ENCODE measurements at regions of chr5 and their contacts with region 1.

Region 1: GRCh38 chr5:16934123-16934522 is 2.0 kb downstream of the MYO10 start:
- DNase-seq: peak; percentile 77 to 87
- H3K4me3 ChIP-seq: peak overlapping the region; percentile 97
- H3K4me3 Mint-ChIP-seq: peak overlapping the region; percentile 90
- H3K27ac Mint-ChIP-seq: no peak overlapping the region
- H3K4me1 ChIP-seq: peaks cover 28% of the 10 kb centered on the region
- H3K4me1 Mint-ChIP-seq: peaks cover 30% of the 10 kb centered on the region
- H3K27me3 ChIP-seq: no peaks in the 10 kb centered on the region
- H3K27me3 Mint-ChIP-seq: no peaks in the 10 kb centered on the region
- CTCF ChIP-seq: peak; percentile 97 to 98

Region 2: GRCh38 chr5:16791036-16791705 is 143.0 kb before region 1 on chr5:
- CTCF ChIA-PET with region 1: no interaction called
- POLR2A ChIA-PET with region 1: interaction called, 10 read pairs
- intact Hi-C with region 1: loop called (anchors 1 kb)
- DNase-seq: peak in 1 of 2 experiments; percentile 63
- H3K4me3 ChIP-seq: no peak overlapping the region
- H3K4me3 Mint-ChIP-seq: no peak overlapping the region
- H3K27ac Mint-ChIP-seq: no peak overlapping the region
- H3K4me1 ChIP-seq: no peaks in the 10 kb centered on the region
- H3K4me1 Mint-ChIP-seq: no peaks in the 10 kb centered on the region
- H3K27me3 ChIP-seq: no peaks in the 10 kb centered on the region; the same call in 1 of the 2 replicates
- H3K27me3 Mint-ChIP-seq: no peaks in the 10 kb centered on the region
- CTCF ChIP-seq: peak; percentile 65 to 73

Region 3: GRCh38 chr5:16881251-16881650 is 52.9 kb before region 1 on chr5:
- CTCF ChIA-PET with region 1: interaction called, 4 read pairs
- POLR2A ChIA-PET with region 1: interaction called, 7 read pairs
- intact Hi-C with region 1: loop called (anchors 1 kb)
- DNase-seq: peak; percentile 80 to 85
- H3K4me3 ChIP-seq: no peak overlapping the region; the same call in 1 of the 2 replicates
- H3K4me3 Mint-ChIP-seq: peak overlapping the region; percentile 73
- H3K27ac Mint-ChIP-seq: peak overlapping the region; percentile 90
- H3K4me1 ChIP-seq: peaks cover 80% of the 10 kb centered on the region
- H3K4me1 Mint-ChIP-seq: peaks cover 53% of the 10 kb centered on the region
- H3K27me3 ChIP-seq: no peaks in the 10 kb centered on the region
- H3K27me3 Mint-ChIP-seq: no peaks in the 10 kb centered on the region
- CTCF ChIP-seq: no peak

Region 4: GRCh38 chr5:16952968-16953671 is 19.0 kb after region 1 on chr5:
- CTCF ChIA-PET with region 1: interaction called, 13 read pairs
- POLR2A ChIA-PET with region 1: no interaction called
- intact Hi-C with region 1: no loop called
- DNase-seq: peak; percentile 64 to 74
- H3K4me3 ChIP-seq: no peak overlapping the region
- H3K4me3 Mint-ChIP-seq: no peak overlapping the region
- H3K27ac Mint-ChIP-seq: peak overlapping the region; percentile 82
- H3K4me1 ChIP-seq: peaks cover 12% of the 10 kb centered on the region
- H3K4me1 Mint-ChIP-seq: peaks cover 7% of the 10 kb centered on the region
- H3K27me3 ChIP-seq: no peaks in the 10 kb centered on the region
- H3K27me3 Mint-ChIP-seq: no peaks in the 10 kb centered on the region
- CTCF ChIP-seq: peak in 1 of 2 experiments; percentile 18

Region 5: DNA sequence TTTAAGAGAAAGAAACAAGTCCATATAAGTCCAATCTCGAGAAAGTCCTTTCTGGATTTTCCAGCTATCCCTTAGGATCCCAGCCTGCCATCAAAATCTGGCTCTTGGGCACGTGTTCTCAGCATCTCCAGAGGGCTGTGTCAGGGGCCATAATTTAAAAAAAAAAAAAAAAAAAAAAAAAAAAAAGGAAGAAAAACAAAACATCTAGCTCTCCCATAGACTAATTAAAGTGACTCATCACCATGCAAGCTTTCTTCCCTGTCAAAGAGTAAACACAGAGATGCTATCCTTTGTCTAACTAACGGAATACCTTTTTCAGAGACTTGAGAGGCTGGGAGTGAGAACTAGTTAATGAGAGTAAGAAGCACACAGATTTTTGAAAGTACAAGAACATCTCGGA is 46.9 kb after region 1 on chr5:
- CTCF ChIA-PET with region 1: no interaction called
- POLR2A ChIA-PET with region 1: interaction called, 11 read pairs
- intact Hi-C with region 1: no loop called
- DNase-seq: no peak
- H3K4me3 ChIP-seq: no peak overlapping the region
- H3K4me3 Mint-ChIP-seq: no peak overlapping the region
- H3K27ac Mint-ChIP-seq: no peak overlapping the region
- H3K4me1 ChIP-seq: no peaks in the 10 kb centered on the region
- H3K4me1 Mint-ChIP-seq: peaks cover 7% of the 10 kb centered on the region
- H3K27me3 ChIP-seq: no peaks in the 10 kb centered on the region
- H3K27me3 Mint-ChIP-seq: no peaks in the 10 kb centered on the region
- CTCF ChIP-seq: no peak

Region 6: GRCh38 chr5:17079562-17079961 is 145.4 kb after region 1 on chr5:
- CTCF ChIA-PET with region 1: no interaction called
- POLR2A ChIA-PET with region 1: no interaction called
- intact Hi-C with region 1: loop called (anchors 5 kb)
- DNase-seq: no peak
- H3K4me3 ChIP-seq: no peak overlapping the region
- H3K4me3 Mint-ChIP-seq: no peak overlapping the region
- H3K27ac Mint-ChIP-seq: no peak overlapping the region
- H3K4me1 ChIP-seq: peaks cover 32% of the 10 kb centered on the region
- H3K4me1 Mint-ChIP-seq: peaks cover 34% of the 10 kb centered on the region
- H3K27me3 ChIP-seq: no peaks in the 10 kb centered on the region
- H3K27me3 Mint-ChIP-seq: no peaks in the 10 kb centered on the region
- CTCF ChIP-seq: no peak

Region 7: GRCh38 chr5:17169507-17169906 is 235.4 kb after region 1 on chr5:
- CTCF ChIA-PET with region 1: interaction called, 3 read pairs
- POLR2A ChIA-PET with region 1: no interaction called
- intact Hi-C with region 1: loop called (anchors 1 kb)
- DNase-seq: peak; percentile 48 to 70
- H3K4me3 ChIP-seq: no peak overlapping the region
- H3K4me3 Mint-ChIP-seq: no peak overlapping the region
- H3K27ac Mint-ChIP-seq: peak overlapping the region; percentile 24
- H3K4me1 ChIP-seq: peaks cover 26% of the 10 kb centered on the region
- H3K4me1 Mint-ChIP-seq: peaks cover 31% of the 10 kb centered on the region
- H3K27me3 ChIP-seq: no peaks in the 10 kb centered on the region
- H3K27me3 Mint-ChIP-seq: no peaks in the 10 kb centered on the region
- CTCF ChIP-seq: no peak